Pancreas (tissue), 10 donors: ENCODE measurements at regions of chrX and their contacts with region 1.

Region 1: GRCh38 chrX:1442016-1442665 is 10.6 kb downstream of the ASMTL start:
- DNase-seq: peak in 3 of 6 donors; percentile 8 to 44 (median 43)
- ATAC-seq: no peak
- H3K4me3 ChIP-seq: no peak overlapping the region
- H3K27ac ChIP-seq: no peak overlapping the region
- H3K4me1 ChIP-seq: no peaks in the 10 kb centered on the region
- H3K27me3 ChIP-seq: no peaks in the 10 kb centered on the region
- CTCF ChIP-seq: no peak

Region 2: GRCh38 chrX:1281521-1281920 is 160.6 kb before region 1 on chrX:
- intact Hi-C with region 1: no loop called
- DNase-seq: no peak
- ATAC-seq: no peak
- H3K4me3 ChIP-seq: no peak overlapping the region
- H3K27ac ChIP-seq: no peak overlapping the region
- H3K4me1 ChIP-seq: no peaks in the 10 kb centered on the region
- H3K27me3 ChIP-seq: no peaks in the 10 kb centered on the region
- CTCF ChIP-seq: no peak

Region 3: GRCh38 chrX:1391707-1392375 is 50.3 kb before region 1 on chrX and contains the start of gene SLC25A6:
- intact Hi-C with region 1: loop called in 1 of 3 experiments (anchors 10 kb)
- DNase-seq: peak; percentile 98 to 100 (median 100)
- ATAC-seq: peak; percentile 92 to 96 (median 93)
- H3K4me3 ChIP-seq: peak within 1 kb of the TSS; percentile 86 to 99 (median 91)
- H3K27ac ChIP-seq: peak within 1 kb of the TSS; percentile 92 to 97 (median 94)
- H3K4me1 ChIP-seq: peaks cover 5 to 16% (median 11%) of the 10 kb centered on the region in 3 donors
- H3K27me3 ChIP-seq: no peaks in the 10 kb centered on the region
- CTCF ChIP-seq: no peak
- total RNA-seq, gene SLC25A6: 188 to 398 (median 252) TPM